Posterior cingulate gyrus (tissue), 11 donors: ENCODE measurements at regions of chr1 and their contacts with region 1.

Region 1: GRCh38 chr1:204989266-204990058 is 53.5 kb upstream of the CNTN2 start:
- DNase-seq: peak; percentile 73 to 98 (median 85)

Region 2: GRCh38 chr1:205061665-205062069 is 72.2 kb after region 1 on chr1:
- intact Hi-C with region 1: loop called (anchors 1 kb)
- DNase-seq: peak; percentile 81 to 98 (median 90)

Region 3: DNA sequence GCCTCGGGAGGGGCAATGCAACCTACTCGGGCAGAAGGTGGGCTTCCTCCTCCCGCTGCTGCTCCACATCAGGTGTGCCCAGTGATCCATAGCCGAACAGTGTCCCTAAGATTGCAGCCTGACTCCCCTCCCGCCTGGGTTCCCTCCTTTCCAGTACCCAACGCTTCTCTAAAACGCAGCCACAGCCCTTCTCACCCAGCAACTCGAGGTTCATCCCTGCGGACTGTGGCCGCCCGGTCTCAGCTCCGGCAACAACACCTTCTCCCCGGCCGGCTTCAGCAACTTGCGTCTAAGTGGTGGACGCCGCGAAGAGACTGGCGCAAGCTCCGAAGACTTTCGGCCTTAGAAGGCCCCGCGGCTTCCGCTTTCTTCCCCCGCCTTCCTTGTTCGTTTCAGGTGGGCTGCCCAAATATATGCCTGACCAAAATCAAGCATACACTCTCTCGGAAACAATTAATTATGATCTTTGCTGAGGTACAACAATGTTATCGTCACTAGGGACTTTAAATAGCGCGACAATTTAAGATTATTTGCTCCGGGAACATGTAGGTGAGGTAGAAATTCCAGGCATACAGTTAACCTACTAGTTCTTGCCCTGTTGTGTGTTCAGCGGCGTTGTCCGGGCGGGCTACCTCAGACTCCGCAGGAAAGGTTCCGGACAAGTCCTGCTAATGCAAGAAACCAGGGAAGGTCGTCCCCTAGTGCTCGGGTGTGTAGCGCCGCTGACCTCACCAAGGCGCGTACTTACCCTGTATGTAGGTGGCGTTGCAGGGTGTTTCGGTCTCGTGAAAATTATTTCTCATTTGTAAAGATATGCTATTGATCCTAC is 132.4 kb after region 1 on chr1 and contains the start of gene RBBP5:
- intact Hi-C with region 1: loop called (anchors 1 kb)
- DNase-seq: peak; percentile 91 to 99 (median 94)

Region 4: GRCh38 chr1:205141236-205142101 is 152.0 kb after region 1 on chr1:
- intact Hi-C with region 1: loop called (anchors 10 kb)
- DNase-seq: peak in 9 of 10 donors; percentile 34 to 93 (median 78)